GM12878 (cell line): ENCODE measurements at regions of chr15 and their contacts with region 1.

Region 1: DNA sequence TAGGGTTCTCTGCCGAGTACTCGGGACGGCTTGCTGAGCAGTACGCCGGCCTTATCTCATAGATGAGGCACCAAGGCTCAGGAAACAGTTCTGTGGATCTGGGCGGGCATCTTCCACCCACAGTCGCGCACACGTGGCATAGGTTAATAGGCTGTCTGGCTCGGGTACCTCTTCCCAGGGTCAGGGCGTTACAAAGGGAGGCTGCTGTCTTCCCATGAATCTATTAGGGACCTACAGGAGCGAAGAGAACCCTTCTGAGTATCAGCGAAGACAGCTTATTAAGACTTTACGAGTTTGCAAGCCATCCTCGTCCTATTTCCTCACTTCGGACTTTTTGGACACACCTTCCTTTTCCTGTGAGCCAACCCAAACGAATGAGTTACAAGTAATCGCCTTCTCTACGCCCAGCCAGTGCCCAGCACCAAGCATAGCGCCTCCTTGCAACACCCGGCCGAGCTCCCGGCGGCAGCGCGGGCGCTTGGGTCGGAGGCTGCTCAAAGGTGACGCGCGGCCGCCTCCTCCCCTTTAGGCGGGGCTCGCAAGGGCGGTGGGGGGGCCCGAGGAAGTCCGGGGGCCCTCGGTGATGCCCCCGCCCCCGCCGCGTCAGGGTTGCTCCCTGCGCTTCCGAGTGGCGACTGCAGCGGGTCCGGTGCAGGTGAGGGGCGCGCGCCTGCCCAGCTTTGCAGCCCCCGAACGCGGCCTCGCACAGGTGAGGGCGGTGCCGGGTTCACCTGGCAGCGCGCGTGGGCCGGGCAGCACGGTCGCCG is at the start of gene MCTP2:
- DNase-seq: peak; percentile 57
- ATAC-seq: peak; percentile 87
- H3K4me3 ChIP-seq: peak within 1 kb of the TSS; percentile 61
- H3K27ac ChIP-seq: no peak within 1 kb of the TSS
- H3K4me1 ChIP-seq: peaks cover 16% of the 10 kb centered on the region
- H3K27me3 ChIP-seq: peaks cover 0 to 7% of the 10 kb centered on the region in 2 experiments; a peak in 2 of 4 replicates
- CTCF ChIP-seq: peak in 2 of 3 experiments; percentile 4 to 33; a peak in 2 of 6 replicates
- EP300 ChIP-seq: no peak
- POLR2A ChIP-seq: peak; percentile 52; the same call in 1 of the 2 replicates
- RAD21 ChIP-seq: no peak
- polyA plus RNA-seq, gene MCTP2: 0.24 to 0.26 TPM

Region 2: DNA sequence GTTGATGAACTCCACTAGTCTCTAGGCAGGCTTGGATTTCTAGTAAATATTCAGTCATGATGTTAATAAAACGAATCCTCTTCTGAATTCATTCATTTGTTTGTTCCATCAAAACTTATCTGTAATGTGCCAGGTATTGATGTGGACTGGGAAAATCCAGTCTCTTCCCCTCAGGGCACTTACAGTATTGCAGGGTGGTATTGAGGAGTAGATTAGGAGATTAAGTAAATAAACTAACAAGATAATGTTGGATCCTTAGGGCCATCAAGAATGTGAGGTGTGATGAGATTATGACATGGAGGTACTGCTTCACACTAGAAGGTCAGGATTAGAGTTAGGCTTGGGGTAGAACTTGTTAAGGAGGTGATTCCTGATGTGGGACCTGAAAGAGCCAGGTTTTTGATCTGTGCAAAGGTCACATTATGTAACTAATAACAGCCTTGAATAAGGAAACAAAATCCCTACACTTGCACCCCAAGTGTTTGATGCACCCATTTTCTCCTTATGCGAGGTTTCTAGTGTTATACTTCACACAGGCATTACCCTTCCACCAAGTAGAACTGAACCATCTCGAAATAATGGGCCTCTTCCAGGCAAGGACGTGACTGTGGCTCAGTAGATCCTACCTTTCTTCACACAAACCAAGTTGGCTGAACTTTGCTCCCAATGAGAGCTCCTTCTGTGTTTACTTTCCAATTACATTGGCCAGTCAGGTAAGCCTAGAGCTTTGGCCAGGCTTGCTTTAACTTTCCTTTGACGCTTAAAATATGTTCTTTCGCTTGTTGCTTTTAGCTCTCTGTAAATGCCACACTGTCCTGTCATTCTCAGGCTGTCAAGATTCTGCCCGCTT is 16.9 kb after region 1 on chr15:
- CTCF ChIA-PET with region 1: interaction called, 4 read pairs
- POLR2A ChIA-PET with region 1: interaction called, 10 read pairs
- RAD21 ChIA-PET with region 1: interaction called, 63 read pairs
- SMC1A ChIA-PET with region 1: interaction called, 83 read pairs
- in situ Hi-C with region 1: no loop called
- intact Hi-C with region 1: no loop called
- DNase-seq: no peak
- ATAC-seq: no peak
- H3K4me3 ChIP-seq: no peak overlapping the region
- H3K27ac ChIP-seq: no peak overlapping the region
- H3K4me1 ChIP-seq: no peaks in the 10 kb centered on the region
- H3K27me3 ChIP-seq: no peaks in the 10 kb centered on the region
- CTCF ChIP-seq: no peak
- EP300 ChIP-seq: no peak
- POLR2A ChIP-seq: no peak
- RAD21 ChIP-seq: no peak

Region 3: DNA sequence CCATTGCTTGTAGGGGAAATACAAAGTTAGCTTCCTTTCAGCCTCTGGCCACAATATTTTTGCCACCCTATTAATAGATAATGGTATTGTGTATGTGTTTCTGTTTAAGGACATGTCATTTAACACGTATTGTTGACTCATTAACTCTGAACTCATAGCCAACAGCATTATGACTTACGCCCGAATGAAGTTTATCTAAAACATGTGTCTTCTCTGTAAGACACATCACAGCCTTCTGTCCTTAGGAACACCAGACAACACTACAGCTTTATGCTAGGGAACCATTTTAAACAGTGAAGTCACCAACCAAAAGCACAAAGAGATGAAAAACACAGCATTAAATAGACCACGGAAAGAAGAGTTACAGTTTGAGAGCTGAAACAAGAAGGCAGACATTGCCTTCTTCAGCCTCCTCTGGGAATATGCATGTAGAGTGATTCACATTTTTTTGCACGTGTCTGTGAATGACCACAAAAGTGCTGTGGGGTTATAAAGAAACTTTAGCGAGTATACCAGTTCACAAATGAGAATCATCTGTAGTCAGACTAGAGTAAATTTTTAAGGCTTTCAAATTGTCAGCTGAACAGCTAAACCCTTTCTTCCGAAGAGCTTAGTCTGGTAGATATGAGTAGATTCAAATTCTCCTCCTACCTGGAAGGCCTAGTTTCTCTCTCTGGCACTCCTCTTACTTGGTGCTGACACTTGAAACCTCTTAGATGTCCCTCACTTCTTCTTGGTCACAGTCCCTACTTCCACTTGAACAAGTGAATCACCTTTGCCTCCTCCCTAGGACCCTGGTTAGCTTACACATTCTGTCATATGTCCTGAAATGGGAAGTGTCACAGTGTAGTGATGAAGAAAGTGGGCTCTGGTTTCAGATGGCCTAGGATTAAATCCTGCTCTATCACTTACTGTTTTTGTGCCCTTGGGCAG is 32.5 kb after region 1 on chr15:
- CTCF ChIA-PET with region 1: interaction called, 14 read pairs
- POLR2A ChIA-PET with region 1: interaction called, 23 read pairs
- RAD21 ChIA-PET with region 1: interaction called, 52 read pairs
- SMC1A ChIA-PET with region 1: interaction called, 57 read pairs
- in situ Hi-C with region 1: no loop called
- intact Hi-C with region 1: no loop called
- DNase-seq: peak; percentile 73
- ATAC-seq: peak; percentile 78
- H3K4me3 ChIP-seq: no peak overlapping the region
- H3K27ac ChIP-seq: no peak overlapping the region
- H3K4me1 ChIP-seq: peaks cover 2% of the 10 kb centered on the region; the same call in 1 of the 2 replicates
- H3K27me3 ChIP-seq: no peaks in the 10 kb centered on the region
- CTCF ChIP-seq: no peak
- EP300 ChIP-seq: peak; percentile 45 to 55; a peak in 2 of 4 replicates
- POLR2A ChIP-seq: no peak
- RAD21 ChIP-seq: no peak

Region 4: DNA sequence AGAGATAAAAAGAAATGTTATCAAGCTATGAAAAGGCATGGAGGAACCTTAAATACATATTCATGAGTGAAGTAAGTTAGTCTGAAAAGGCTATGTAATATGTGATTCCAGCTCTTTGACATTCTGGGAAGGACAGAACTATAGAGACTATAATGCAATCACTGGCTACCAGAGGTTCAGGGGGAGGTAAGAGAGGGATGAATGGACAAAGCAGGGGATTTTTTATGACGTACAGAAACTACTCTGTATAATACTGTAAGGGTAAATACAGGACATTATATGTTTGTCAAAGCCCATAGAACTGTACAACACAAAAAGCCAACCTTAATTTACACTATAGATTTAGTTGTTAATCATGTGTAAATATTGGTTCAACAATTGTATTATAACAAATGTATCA is 46.3 kb after region 1 on chr15:
- CTCF ChIA-PET with region 1: interaction called, 3 read pairs
- POLR2A ChIA-PET with region 1: interaction called, 7 read pairs
- RAD21 ChIA-PET with region 1: interaction called, 5 read pairs
- SMC1A ChIA-PET with region 1: interaction called, 22 read pairs
- in situ Hi-C with region 1: no loop called
- intact Hi-C with region 1: no loop called
- DNase-seq: no peak
- ATAC-seq: peak; percentile 78
- H3K4me3 ChIP-seq: no peak overlapping the region
- H3K27ac ChIP-seq: no peak overlapping the region
- H3K4me1 ChIP-seq: no peaks in the 10 kb centered on the region
- H3K27me3 ChIP-seq: no peaks in the 10 kb centered on the region
- CTCF ChIP-seq: no peak
- EP300 ChIP-seq: no peak; a peak in 1 of 4 replicates
- POLR2A ChIP-seq: no peak
- RAD21 ChIP-seq: no peak

Region 5: GRCh38 chr15:94297558-94297957 is 66.4 kb after region 1 on chr15:
- CTCF ChIA-PET with region 1: interaction called, 5 read pairs
- POLR2A ChIA-PET with region 1: interaction called, 6 read pairs
- RAD21 ChIA-PET with region 1: interaction called, 3 read pairs
- SMC1A ChIA-PET with region 1: interaction called, 156 read pairs
- in situ Hi-C with region 1: no loop called
- intact Hi-C with region 1: no loop called
- DNase-seq: no peak
- ATAC-seq: peak; percentile 80
- H3K4me3 ChIP-seq: no peak overlapping the region
- H3K27ac ChIP-seq: no peak overlapping the region
- H3K4me1 ChIP-seq: no peaks in the 10 kb centered on the region
- H3K27me3 ChIP-seq: no peaks in the 10 kb centered on the region
- CTCF ChIP-seq: no peak
- EP300 ChIP-seq: no peak
- POLR2A ChIP-seq: no peak
- RAD21 ChIP-seq: no peak